Naive thymus-derived CD8-positive, alpha-beta T cell (primary cell): ENCODE measurements at regions of chr17 and their contacts with region 1.

Region 1: GRCh38 chr17:40615295-40615988 is 32.2 kb downstream of the SMARCE1 start:
- DNase-seq: peak in 9 of 10 donors; percentile 48 to 81 (median 67)
- ATAC-seq: peak; percentile 59
- H3K4me3 Mint-ChIP-seq: peak overlapping the region; percentile 67 to 90 (median 85)
- H3K27ac Mint-ChIP-seq: peak overlapping the region; percentile 93 to 100 (median 98)
- H3K4me1 Mint-ChIP-seq: peaks cover 35 to 81% (median 81%) of the 10 kb centered on the region in 4 donors
- H3K27me3 Mint-ChIP-seq: no peaks in the 10 kb centered on the region

Region 2: GRCh38 chr17:40588552-40588951 is 26.9 kb before region 1 on chr17:
- POLR2A ChIA-PET with region 1: interaction called, 97 read pairs
- DNase-seq: no peak
- ATAC-seq: peak in 1 of 2 donors; percentile 44
- H3K4me3 Mint-ChIP-seq: peak overlapping the region; percentile 6 to 81 (median 72)
- H3K27ac Mint-ChIP-seq: peak overlapping the region; percentile 89 to 99 (median 94)
- H3K4me1 Mint-ChIP-seq: peaks cover 50 to 88% (median 83%) of the 10 kb centered on the region in 4 donors
- H3K27me3 Mint-ChIP-seq: no peaks in the 10 kb centered on the region